ENCODE measurements at regions of chr5 and their contacts with region 1.

Region 1: GRCh38 chr5:53262348-53262970 is 152.9 kb upstream of the MOCS2 start:
- DNase-seq: peak; percentile 2
- ATAC-seq: peak; percentile 48; the same call in 1 of the 3 replicates
- H3K4me3 ChIP-seq: no peak overlapping the region
- H3K27ac ChIP-seq: no peak overlapping the region
- H3K4me1 ChIP-seq: no peaks in the 10 kb centered on the region
- H3K27me3 ChIP-seq: no peaks in the 10 kb centered on the region
- CTCF ChIP-seq: peak; percentile 67
- EP300 ChIP-seq: no peak
- POLR2A ChIP-seq: no peak
- RAD21 ChIP-seq: no peak

Region 2: DNA sequence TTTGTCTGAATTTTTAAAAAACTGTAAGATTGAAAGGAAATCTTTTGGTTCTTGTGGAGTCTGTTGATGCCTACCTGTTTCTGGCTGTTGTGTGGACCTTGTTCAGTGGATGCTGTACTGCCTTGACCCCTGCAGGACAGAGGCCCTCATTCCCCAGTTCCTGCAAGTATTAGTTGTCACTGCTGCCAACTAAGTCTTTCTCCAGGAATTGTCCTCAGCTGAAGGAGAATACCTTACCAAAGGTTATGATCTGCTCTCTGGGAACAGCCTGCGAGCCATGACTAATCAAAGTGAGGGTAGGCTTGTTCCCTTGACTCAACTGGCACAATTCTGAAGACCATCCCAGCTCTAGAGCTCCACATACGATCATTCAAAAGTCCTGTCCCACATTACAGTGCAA is 72.7 kb after region 1 on chr5:
- CTCF ChIA-PET with region 1: no interaction called
- POLR2A ChIA-PET with region 1: no interaction called
- in situ Hi-C with region 1: no loop called
- intact Hi-C with region 1: loop called (anchors 1 kb)
- DNase-seq: no peak
- ATAC-seq: peak; percentile 89
- H3K4me3 ChIP-seq: no peak overlapping the region
- H3K27ac ChIP-seq: no peak overlapping the region
- H3K4me1 ChIP-seq: no peaks in the 10 kb centered on the region
- H3K27me3 ChIP-seq: no peaks in the 10 kb centered on the region
- CTCF ChIP-seq: peak; percentile 55
- EP300 ChIP-seq: no peak
- POLR2A ChIP-seq: no peak
- RAD21 ChIP-seq: no peak